ENCODE measurements at regions of chr13 and their contacts with region 1.

Region 1: GRCh38 chr13:36736119-36736726 is 62.4 kb downstream of the SERTM1 start:
- DNase-seq: peak; percentile 35
- ATAC-seq: no peak
- H3K4me3 ChIP-seq: no peak overlapping the region
- H3K27ac ChIP-seq: no peak overlapping the region
- H3K4me1 ChIP-seq: no peaks in the 10 kb centered on the region
- H3K27me3 ChIP-seq: peaks cover 0 to 5% of the 10 kb centered on the region in 2 experiments; a peak in 2 of 5 replicates
- CTCF ChIP-seq: peak; percentile 57
- EP300 ChIP-seq: no peak
- POLR2A ChIP-seq: no peak
- RAD21 ChIP-seq: no peak

Region 2: GRCh38 chr13:35978603-35979316 is 757.5 kb before region 1 on chr13:
- CTCF ChIA-PET with region 1: no interaction called
- POLR2A ChIA-PET with region 1: no interaction called
- in situ Hi-C with region 1: loop called (anchors 25 kb)
- intact Hi-C with region 1: no loop called
- DNase-seq: peak; percentile 42
- ATAC-seq: peak; percentile 41; the same call in 1 of the 3 replicates
- H3K4me3 ChIP-seq: no peak overlapping the region
- H3K27ac ChIP-seq: no peak overlapping the region
- H3K4me1 ChIP-seq: no peaks in the 10 kb centered on the region
- H3K27me3 ChIP-seq: no peaks in the 10 kb centered on the region; a peak in 1 of 5 replicates
- CTCF ChIP-seq: peak; percentile 72
- EP300 ChIP-seq: no peak
- POLR2A ChIP-seq: no peak
- RAD21 ChIP-seq: peak; percentile 61; the same call in 1 of the 2 replicates

Region 3: GRCh38 chr13:36282818-36283445 is 453.3 kb before region 1 on chr13:
- CTCF ChIA-PET with region 1: interaction called, 7 read pairs
- POLR2A ChIA-PET with region 1: no interaction called
- in situ Hi-C with region 1: loop called (anchors 5 kb)
- intact Hi-C with region 1: loop called (anchors 1 kb)
- DNase-seq: peak; percentile 17
- ATAC-seq: peak; percentile 62
- H3K4me3 ChIP-seq: no peak overlapping the region
- H3K27ac ChIP-seq: no peak overlapping the region
- H3K4me1 ChIP-seq: no peaks in the 10 kb centered on the region
- H3K27me3 ChIP-seq: no peaks in the 10 kb centered on the region
- CTCF ChIP-seq: peak; percentile 69
- EP300 ChIP-seq: no peak
- POLR2A ChIP-seq: no peak
- RAD21 ChIP-seq: 0 out of 2 replicates have a peak, but pooled peaks have one; percentile 42

Region 4: DNA sequence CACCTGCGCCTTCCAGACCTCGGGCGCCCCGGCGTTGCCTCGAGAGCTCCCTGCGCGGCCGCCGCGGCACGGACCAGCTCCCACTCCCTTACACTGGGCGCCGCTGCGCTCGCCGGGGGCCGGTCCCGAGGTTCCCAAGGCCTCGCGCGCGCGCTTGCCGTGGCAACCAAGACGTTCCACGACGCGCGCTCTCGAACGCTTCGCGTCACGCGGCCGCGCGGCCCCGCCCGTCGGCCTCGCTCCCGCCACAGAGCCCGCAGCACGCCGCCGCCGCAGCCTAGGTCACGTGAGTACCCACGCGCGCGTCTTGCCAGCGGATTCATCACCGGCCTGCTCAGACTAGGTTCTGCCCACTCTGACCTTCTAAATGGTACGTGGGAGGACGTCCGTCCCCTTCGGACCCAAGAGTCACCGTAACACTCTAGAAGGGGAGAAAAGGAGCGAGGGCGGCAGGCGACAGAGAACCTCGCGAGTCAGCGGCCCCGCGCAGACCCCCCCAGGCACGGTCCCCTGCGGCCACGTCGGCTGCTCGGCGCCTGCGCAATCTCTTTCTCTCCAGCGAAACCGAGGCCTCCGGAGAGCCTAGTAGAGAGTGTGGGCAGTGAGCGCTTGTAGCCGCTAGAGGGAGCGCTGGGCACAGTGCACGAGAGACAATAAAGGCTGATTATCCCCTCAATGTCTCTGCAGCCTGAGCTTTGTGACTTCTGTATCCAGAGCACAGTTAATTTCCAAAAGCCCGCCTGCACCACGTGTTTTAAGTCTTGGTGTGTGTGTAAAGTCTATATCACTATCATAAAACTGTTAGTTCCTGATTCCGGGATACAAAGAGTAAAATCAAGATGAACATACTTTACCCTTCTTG is 389.8 kb before region 1 on chr13 and contains the start of gene SPART:
- CTCF ChIA-PET with region 1: no interaction called
- POLR2A ChIA-PET with region 1: no interaction called
- in situ Hi-C with region 1: no loop called
- intact Hi-C with region 1: loop called (anchors 5 kb)
- DNase-seq: peak; percentile 72
- ATAC-seq: peak; percentile 96
- H3K4me3 ChIP-seq: peak within 1 kb of the TSS; percentile 58 to 75 (median 66); a peak in 5 of 6 replicates
- H3K27ac ChIP-seq: peak within 1 kb of the TSS; percentile 77
- H3K4me1 ChIP-seq: peaks cover 23% of the 10 kb centered on the region
- H3K27me3 ChIP-seq: no peaks in the 10 kb centered on the region
- CTCF ChIP-seq: peak; percentile 95
- EP300 ChIP-seq: no peak
- POLR2A ChIP-seq: peak in 1 of 2 experiments; percentile 37; a peak in 2 of 4 replicates
- RAD21 ChIP-seq: peak; percentile 65; the same call in 1 of the 2 replicates
- total RNA-seq, gene SPART: 28.8 and 48.6 TPM in 2 replicates

Region 5: GRCh38 chr13:36405151-36405550 is 331.1 kb before region 1 on chr13:
- CTCF ChIA-PET with region 1: no interaction called
- POLR2A ChIA-PET with region 1: no interaction called
- in situ Hi-C with region 1: no loop called
- intact Hi-C with region 1: no loop called
- DNase-seq: no peak
- ATAC-seq: no peak
- H3K4me3 ChIP-seq: no peak overlapping the region
- H3K27ac ChIP-seq: no peak overlapping the region
- H3K4me1 ChIP-seq: no peaks in the 10 kb centered on the region
- H3K27me3 ChIP-seq: no peaks in the 10 kb centered on the region
- CTCF ChIP-seq: no peak
- EP300 ChIP-seq: no peak
- POLR2A ChIP-seq: no peak
- RAD21 ChIP-seq: no peak

Region 6: GRCh38 chr13:36420437-36420891 is 315.8 kb before region 1 on chr13:
- CTCF ChIA-PET with region 1: interaction called, 20 read pairs
- POLR2A ChIA-PET with region 1: no interaction called
- in situ Hi-C with region 1: loop called (anchors 10 kb)
- intact Hi-C with region 1: loop called (anchors 1 kb)
- DNase-seq: peak; percentile 61
- ATAC-seq: peak; percentile 99
- H3K4me3 ChIP-seq: no peak overlapping the region
- H3K27ac ChIP-seq: no peak overlapping the region
- H3K4me1 ChIP-seq: no peaks in the 10 kb centered on the region
- H3K27me3 ChIP-seq: no peaks in the 10 kb centered on the region
- CTCF ChIP-seq: peak; percentile 85
- EP300 ChIP-seq: no peak
- POLR2A ChIP-seq: no peak
- RAD21 ChIP-seq: 0 out of 2 replicates have a peak, but pooled peaks have one; percentile 29

Region 7: DNA sequence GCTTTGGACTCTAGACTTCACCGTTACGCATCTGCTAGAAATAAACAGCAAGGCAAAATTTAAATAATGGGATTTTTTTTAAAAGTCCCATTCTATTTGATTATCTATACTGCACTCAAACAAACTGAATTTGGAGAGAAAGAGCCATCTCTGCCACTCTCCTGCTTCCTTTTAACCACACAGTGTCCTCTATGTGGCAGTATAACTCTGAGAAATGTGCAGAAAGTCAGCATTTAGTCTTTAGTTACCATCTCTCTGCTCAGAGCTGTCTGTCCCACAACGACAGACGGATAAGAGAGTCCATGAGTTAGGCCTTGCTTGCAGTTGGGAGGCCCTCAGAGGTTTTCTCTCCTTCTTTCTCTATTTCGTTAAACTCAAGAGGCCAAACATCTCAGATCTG is 282.7 kb before region 1 on chr13:
- CTCF ChIA-PET with region 1: interaction called, 5 read pairs
- POLR2A ChIA-PET with region 1: no interaction called
- in situ Hi-C with region 1: no loop called
- intact Hi-C with region 1: loop called (anchors 1 kb)
- DNase-seq: no peak
- ATAC-seq: peak; percentile 80
- H3K4me3 ChIP-seq: no peak overlapping the region
- H3K27ac ChIP-seq: no peak overlapping the region
- H3K4me1 ChIP-seq: no peaks in the 10 kb centered on the region
- H3K27me3 ChIP-seq: peaks cover 0 to 1% of the 10 kb centered on the region in 2 experiments; a peak in 2 of 5 replicates
- CTCF ChIP-seq: peak; percentile 43
- EP300 ChIP-seq: no peak
- POLR2A ChIP-seq: no peak
- RAD21 ChIP-seq: no peak

Region 8: GRCh38 chr13:36806102-36806501 is 69.9 kb after region 1 on chr13:
- CTCF ChIA-PET with region 1: no interaction called
- POLR2A ChIA-PET with region 1: no interaction called
- in situ Hi-C with region 1: no loop called
- intact Hi-C with region 1: no loop called
- DNase-seq: no peak
- ATAC-seq: no peak
- H3K4me3 ChIP-seq: no peak overlapping the region
- H3K27ac ChIP-seq: no peak overlapping the region
- H3K4me1 ChIP-seq: no peaks in the 10 kb centered on the region
- H3K27me3 ChIP-seq: no peaks in the 10 kb centered on the region; a peak in 1 of 5 replicates
- CTCF ChIP-seq: no peak
- EP300 ChIP-seq: no peak
- POLR2A ChIP-seq: no peak
- RAD21 ChIP-seq: no peak

Region 9: DNA sequence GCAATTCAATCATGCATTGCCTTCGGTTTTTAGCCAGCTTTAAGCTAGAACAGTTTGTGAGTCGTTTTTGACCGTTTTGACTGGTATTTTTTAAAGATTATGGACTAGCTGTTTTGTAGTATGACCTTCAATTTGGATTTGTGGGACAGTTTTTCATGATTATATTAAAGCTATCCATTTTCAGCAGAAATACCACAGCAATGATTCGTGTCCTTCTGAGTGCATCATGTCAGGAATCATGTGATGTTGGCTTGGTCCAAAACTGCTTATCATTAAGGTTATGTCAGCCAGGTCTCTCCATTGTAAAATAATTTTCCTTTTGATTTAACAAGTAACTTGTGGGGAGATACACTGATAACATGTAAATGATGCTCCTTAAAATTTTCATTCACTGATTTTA is 633.4 kb after region 1 on chr13:
- CTCF ChIA-PET with region 1: no interaction called
- POLR2A ChIA-PET with region 1: no interaction called
- in situ Hi-C with region 1: no loop called
- intact Hi-C with region 1: no loop called
- DNase-seq: no peak
- ATAC-seq: no peak
- H3K4me3 ChIP-seq: no peak overlapping the region
- H3K27ac ChIP-seq: no peak overlapping the region
- H3K4me1 ChIP-seq: no peaks in the 10 kb centered on the region
- H3K27me3 ChIP-seq: no peaks in the 10 kb centered on the region
- CTCF ChIP-seq: no peak
- EP300 ChIP-seq: no peak
- POLR2A ChIP-seq: no peak
- RAD21 ChIP-seq: no peak

Measured in HepG2 (cell line).